ENCODE measurements at regions of chr16 and their contacts with region 1.

Region 1: DNA sequence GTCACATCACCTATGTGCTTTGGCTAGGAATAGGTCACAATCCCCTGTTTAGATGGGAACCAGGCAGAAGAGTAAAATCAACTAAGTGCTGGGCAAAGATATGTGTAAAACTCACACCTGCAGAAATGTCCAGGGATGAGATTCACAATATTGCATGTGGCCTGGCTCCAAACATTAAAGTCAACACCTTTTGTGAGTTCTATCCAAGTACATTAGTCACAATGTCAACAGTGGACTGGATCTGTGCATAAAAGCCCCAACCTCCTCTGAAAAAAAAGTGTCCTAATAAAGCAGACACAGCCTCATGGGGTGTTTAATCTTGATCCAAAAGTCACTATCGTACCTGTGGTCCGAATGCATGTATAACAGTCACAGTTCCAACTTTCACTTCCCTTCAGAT is 1990.3 kb downstream of the TP53TG3F start:
- DNase-seq: no peak
- ATAC-seq: no peak
- H3K4me3 ChIP-seq: no peak overlapping the region
- H3K27ac ChIP-seq: no peak overlapping the region
- H3K4me1 ChIP-seq: no peaks in the 10 kb centered on the region
- H3K27me3 ChIP-seq: no peaks in the 10 kb centered on the region
- CTCF ChIP-seq: no peak

Region 2: GRCh38 chr16:35414563-35414962 is 35.1 kb before region 1 on chr16:
- intact Hi-C with region 1: no loop called
- DNase-seq: no peak
- ATAC-seq: no peak
- H3K4me3 ChIP-seq: no peak overlapping the region
- H3K27ac ChIP-seq: no peak overlapping the region
- H3K4me1 ChIP-seq: no peaks in the 10 kb centered on the region
- H3K27me3 ChIP-seq: no peaks in the 10 kb centered on the region
- CTCF ChIP-seq: no peak

Region 3: GRCh38 chr16:35492225-35492624 is 42.6 kb after region 1 on chr16:
- intact Hi-C with region 1: loop called in 1 of 10 experiments (anchors 10 kb)
- DNase-seq: no peak
- ATAC-seq: no peak
- H3K4me3 ChIP-seq: no peak overlapping the region
- H3K27ac ChIP-seq: no peak overlapping the region
- H3K4me1 ChIP-seq: no peaks in the 10 kb centered on the region
- H3K27me3 ChIP-seq: peaks cover 0 to 8% (median 0%) of the 10 kb centered on the region in 7 donors
- CTCF ChIP-seq: no peak